ENCODE measurements at regions of chr18 and their contacts with region 1.

Region 1: DNA sequence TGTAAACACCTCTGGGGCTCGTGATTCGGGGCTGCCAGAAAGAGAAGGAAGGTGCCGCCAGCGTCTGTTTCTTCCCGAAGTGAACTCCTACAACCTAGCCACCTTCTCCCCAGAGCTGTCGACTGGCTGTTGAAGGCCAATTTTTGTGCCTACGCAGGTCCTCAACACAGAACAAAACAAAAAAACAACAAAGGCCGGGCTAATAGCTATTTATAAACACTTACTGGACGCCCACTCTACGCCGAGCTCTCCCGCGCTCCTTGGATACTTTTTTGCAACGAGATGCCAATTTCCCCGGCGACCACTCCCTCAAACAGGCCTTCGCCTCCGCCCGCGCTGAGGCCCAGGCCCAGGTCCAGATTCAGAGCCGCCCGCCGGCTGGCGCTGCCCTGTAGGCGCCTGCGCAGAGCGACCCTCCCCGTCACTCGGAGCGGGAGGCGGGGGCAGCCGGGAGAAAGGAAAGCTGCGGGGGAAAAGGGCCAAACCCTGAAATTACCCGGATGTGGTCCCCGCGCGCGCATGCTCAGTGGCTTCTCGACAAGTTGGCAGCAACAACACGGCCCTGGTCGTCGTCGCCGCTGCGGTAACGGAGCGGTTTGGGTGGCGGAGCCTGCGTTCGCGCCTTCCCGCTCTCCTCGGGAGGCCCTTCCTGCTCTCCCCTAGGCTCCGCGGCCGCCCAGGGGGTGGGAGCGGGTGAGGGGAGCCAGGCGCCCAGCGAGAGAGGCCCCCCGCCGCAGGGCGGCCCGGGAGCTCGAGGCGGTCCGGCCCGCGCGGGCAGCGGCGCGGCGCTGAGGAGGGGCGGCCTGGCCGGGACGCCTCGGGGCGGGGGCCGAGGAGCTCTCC is at the start of gene SMAD4:
- DNase-seq: peak; percentile 91 to 95 (median 95)
- H3K4me3 ChIP-seq: peak within 1 kb of the TSS; percentile 75 to 89 (median 78)
- H3K4me3 Mint-ChIP-seq: peak within 1 kb of the TSS; percentile 89 to 99
- H3K27ac ChIP-seq: peak within 1 kb of the TSS; percentile 82 to 89
- H3K27ac Mint-ChIP-seq: peak within 1 kb of the TSS; percentile 96 to 99 (median 98)
- H3K4me1 ChIP-seq: peaks cover 41 to 54% of the 10 kb centered on the region in 2 donors
- H3K4me1 Mint-ChIP-seq: peaks cover 48% of the 10 kb centered on the region
- H3K27me3 ChIP-seq: no peaks in the 10 kb centered on the region
- H3K27me3 Mint-ChIP-seq: no peaks in the 10 kb centered on the region
- CTCF ChIP-seq: no peak
- polyA plus RNA-seq, gene SMAD4: 21.0 to 34.0 (median 29.1) TPM

Region 2: GRCh38 chr18:50806208-50806616 is 223.7 kb before region 1 on chr18:
- intact Hi-C with region 1: loop called in 1 of 2 experiments (anchors 10 kb)
- DNase-seq: peak; percentile 74 to 82 (median 76)
- H3K4me3 ChIP-seq: peak overlapping the region; percentile 6 to 60 (median 8)
- H3K4me3 Mint-ChIP-seq: peak overlapping the region; percentile 59 to 84
- H3K27ac ChIP-seq: peak overlapping the region; percentile 81 to 87
- H3K27ac Mint-ChIP-seq: peak overlapping the region; percentile 85 to 98 (median 91)
- H3K4me1 ChIP-seq: peaks cover 40 to 51% of the 10 kb centered on the region in 2 donors
- H3K4me1 Mint-ChIP-seq: peaks cover 39% of the 10 kb centered on the region
- H3K27me3 ChIP-seq: no peaks in the 10 kb centered on the region
- H3K27me3 Mint-ChIP-seq: peaks cover 2 to 6% (median 5%) of the 10 kb centered on the region in 3 donors
- CTCF ChIP-seq: no peak

Region 3: DNA sequence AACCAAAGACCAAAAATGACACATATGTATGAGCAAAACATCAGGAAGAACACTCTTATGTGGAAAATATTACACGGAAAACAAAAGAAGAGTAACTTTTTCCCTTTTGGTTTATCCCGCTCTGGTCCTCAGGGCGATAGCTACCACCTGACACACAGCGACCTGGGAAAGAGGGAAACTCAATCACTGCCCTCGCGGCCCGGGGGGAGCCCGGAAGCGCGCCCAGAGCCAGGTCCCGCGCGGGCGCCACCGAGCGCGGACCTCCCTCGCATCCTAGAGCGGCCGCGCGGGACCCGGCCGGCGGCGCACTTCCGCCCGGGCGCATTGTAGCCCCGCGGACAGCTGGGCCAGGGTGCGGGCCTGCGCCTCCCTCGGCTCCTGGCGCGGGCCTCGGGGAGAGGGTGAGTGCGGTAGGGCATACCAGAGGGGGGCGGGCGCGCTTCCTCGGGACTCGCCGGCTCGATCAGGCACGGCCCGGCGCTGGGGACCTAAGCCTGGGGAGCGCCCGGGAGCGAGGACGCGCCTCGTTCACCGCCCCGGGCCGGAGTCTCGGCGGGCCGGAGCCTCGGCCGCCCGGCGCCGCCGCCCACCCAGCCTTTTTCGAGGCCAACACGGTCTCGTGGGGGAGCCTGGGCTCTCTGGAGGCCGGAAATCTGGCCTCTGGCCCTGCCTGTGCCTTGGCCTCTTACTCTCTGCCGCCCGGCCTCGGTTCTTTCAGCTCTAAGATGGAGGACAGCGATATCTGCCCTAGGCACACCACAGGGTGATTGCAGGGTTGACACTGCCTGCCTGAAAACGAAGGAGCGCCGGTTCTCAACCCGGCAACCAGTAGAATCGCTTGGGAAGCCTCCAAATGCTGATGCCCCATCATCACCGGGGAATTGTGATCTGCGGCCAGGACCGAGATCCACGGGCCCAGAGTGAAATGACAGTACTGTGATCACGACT is 61.9 kb before region 1 on chr18 and contains the start of gene ELAC1:
- intact Hi-C with region 1: loop called in 1 of 2 experiments (anchors 5 kb)
- DNase-seq: peak; percentile 63 to 70 (median 67)
- H3K4me3 ChIP-seq: peak within 1 kb of the TSS; percentile 80 to 91 (median 85)
- H3K4me3 Mint-ChIP-seq: peak within 1 kb of the TSS; percentile 88 to 96
- H3K27ac ChIP-seq: peak within 1 kb of the TSS; percentile 85 to 90
- H3K27ac Mint-ChIP-seq: peak within 1 kb of the TSS; percentile 85 to 96 (median 93)
- H3K4me1 ChIP-seq: peaks cover 11 to 15% of the 10 kb centered on the region in 2 donors
- H3K4me1 Mint-ChIP-seq: peaks cover 18% of the 10 kb centered on the region
- H3K27me3 ChIP-seq: no peaks in the 10 kb centered on the region
- H3K27me3 Mint-ChIP-seq: peaks cover 0 to 3% (median 0%) of the 10 kb centered on the region in 3 donors
- CTCF ChIP-seq: no peak
- polyA plus RNA-seq, gene ELAC1: 2.6 to 11.5 (median 4.5) TPM

Measured in CD14-positive monocyte (primary cell).